ENCODE measurements at regions of chr9 and their contacts with region 1.

Region 1: GRCh38 chr9:73565833-73566465 is 414.3 kb downstream of the ANXA1 start:
- DNase-seq: peak; percentile 40
- ATAC-seq: peak; percentile 65

Region 2: DNA sequence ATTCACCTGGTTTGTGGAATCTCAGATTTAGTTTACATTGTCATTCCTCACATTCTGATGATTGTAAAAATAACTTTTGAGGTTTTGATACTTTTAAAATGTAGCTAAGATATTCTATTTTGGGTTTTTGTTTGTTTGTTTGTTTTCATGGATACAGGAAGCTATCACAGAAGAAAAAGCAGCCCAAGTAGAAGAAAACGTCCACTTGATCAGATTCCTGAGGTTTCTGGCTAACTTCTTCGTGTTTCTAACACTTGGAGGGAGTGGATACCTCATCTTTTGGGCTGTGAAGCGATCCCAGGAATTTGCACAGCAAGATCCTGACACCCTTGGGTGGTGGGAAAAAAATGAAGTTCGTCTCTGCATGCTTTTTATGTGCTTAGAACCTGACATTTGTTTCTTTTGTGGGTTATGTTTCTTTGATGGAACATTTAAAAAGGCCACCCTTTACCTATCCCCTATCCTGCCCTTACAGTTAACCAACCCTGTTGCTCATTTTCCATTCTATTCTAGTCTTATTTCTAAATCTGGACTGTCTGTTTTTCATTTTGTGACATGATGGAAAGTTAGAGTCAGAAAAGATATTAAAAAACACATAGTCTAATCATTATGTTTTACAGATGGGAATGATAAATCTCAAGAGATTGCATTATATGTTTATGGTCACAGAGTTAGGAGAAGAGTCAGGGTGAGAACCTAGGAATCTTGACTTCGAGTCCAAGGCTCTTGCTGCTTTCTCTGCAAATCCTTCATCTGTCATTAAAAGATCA is 776.8 kb before region 1 on chr9:
- intact Hi-C with region 1: no loop called
- DNase-seq: no peak
- ATAC-seq: no peak

Region 3: DNA sequence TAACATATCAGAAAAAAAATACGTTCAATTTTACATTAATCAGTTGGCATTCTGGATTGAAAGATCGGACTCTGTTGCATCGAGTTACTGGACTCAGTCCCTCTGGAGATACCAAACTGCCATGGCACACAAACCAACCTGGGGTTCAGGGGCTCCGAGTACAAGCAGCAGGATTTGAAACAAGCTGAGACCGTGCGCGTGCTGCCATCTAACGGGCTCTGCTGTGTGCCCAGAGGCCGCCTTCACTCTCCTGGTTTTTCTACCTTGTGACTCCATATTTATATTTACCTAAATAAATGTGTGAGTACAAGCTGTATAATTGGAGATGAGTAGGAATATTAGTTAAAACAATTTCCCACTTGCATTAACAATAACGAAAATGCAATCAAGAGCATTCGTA is 366.1 kb before region 1 on chr9:
- intact Hi-C with region 1: loop called (anchors 5 kb)
- DNase-seq: no peak
- ATAC-seq: no peak

Region 4: GRCh38 chr9:73269430-73270101 is 296.4 kb before region 1 on chr9:
- intact Hi-C with region 1: loop called (anchors 1 kb)
- DNase-seq: no peak
- ATAC-seq: no peak